Activated naive CD4-positive, alpha-beta T cell treated with anti-CD3 and anti-CD28 coated beads for 36 hours (primary cell): ENCODE measurements at regions of chr3 and their contacts with region 1.

Region 1: GRCh38 chr3:114213627-114214541 is 23.5 kb downstream of the ZNF80 start:
- DNase-seq: peak; percentile 88
- H3K4me3 Mint-ChIP-seq: no peak overlapping the region
- H3K27ac Mint-ChIP-seq: no peak overlapping the region
- H3K4me1 Mint-ChIP-seq: peaks cover 8% of the 10 kb centered on the region
- H3K27me3 Mint-ChIP-seq: no peaks in the 10 kb centered on the region

Region 2: GRCh38 chr3:113002679-113003078 is 1211.2 kb before region 1 on chr3:
- CTCF ChIA-PET with region 1: no interaction called
- intact Hi-C with region 1: loop called (anchors 10 kb)
- DNase-seq: peak; percentile 90
- H3K4me3 Mint-ChIP-seq: peak overlapping the region; percentile 42
- H3K27ac Mint-ChIP-seq: peak overlapping the region; percentile 95
- H3K4me1 Mint-ChIP-seq: peaks cover 86% of the 10 kb centered on the region
- H3K27me3 Mint-ChIP-seq: no peaks in the 10 kb centered on the region

Region 3: DNA sequence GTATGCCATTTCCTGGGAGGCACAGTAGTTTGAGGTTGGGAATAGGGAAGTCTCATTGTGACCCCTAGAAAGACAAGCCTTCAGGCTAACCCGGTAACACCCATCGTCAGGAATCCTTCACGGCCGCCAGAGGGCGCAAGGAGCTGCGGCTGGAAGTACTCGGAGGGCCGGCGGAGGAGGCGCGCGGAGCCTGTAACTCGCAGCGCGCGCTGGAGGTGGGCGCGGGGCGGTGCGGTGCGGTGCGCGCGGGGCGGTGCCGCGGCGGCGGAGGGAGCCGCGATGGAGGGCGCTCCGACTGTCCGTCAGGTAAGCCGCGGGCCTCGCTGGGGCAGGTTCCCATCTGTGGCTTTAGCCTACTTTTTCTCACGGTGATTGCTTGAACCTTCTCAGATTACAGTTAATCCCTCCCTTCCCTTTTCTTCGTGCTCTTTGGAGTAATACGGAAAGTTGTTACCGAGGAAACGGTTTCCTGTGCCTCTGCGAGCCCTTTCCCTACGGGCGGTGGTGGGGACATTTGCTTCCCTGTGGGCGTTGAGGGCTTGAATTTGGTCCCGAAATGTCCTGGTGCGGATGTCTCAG is 375.2 kb before region 1 on chr3 and contains the start of gene GRAMD1C:
- CTCF ChIA-PET with region 1: no interaction called
- intact Hi-C with region 1: loop called (anchors 2 kb)
- DNase-seq: peak; percentile 89
- H3K4me3 Mint-ChIP-seq: peak within 1 kb of the TSS; percentile 75
- H3K27ac Mint-ChIP-seq: no peak within 1 kb of the TSS
- H3K4me1 Mint-ChIP-seq: peaks cover 6% of the 10 kb centered on the region
- H3K27me3 Mint-ChIP-seq: no peaks in the 10 kb centered on the region
- total RNA-seq, gene GRAMD1C: 0.67 to 1.3 TPM

Region 4: GRCh38 chr3:114067804-114068203 is 146.1 kb before region 1 on chr3:
- CTCF ChIA-PET with region 1: no interaction called
- intact Hi-C with region 1: no loop called
- DNase-seq: no peak
- H3K4me3 Mint-ChIP-seq: no peak overlapping the region
- H3K27ac Mint-ChIP-seq: no peak overlapping the region
- H3K4me1 Mint-ChIP-seq: peaks cover 2% of the 10 kb centered on the region
- H3K27me3 Mint-ChIP-seq: no peaks in the 10 kb centered on the region

Region 5: GRCh38 chr3:114242947-114243346 is 29.1 kb after region 1 on chr3:
- CTCF ChIA-PET with region 1: no interaction called
- intact Hi-C with region 1: loop called (anchors 1 kb)
- DNase-seq: peak; percentile 39
- H3K4me3 Mint-ChIP-seq: no peak overlapping the region
- H3K27ac Mint-ChIP-seq: no peak overlapping the region
- H3K4me1 Mint-ChIP-seq: peaks cover 23% of the 10 kb centered on the region
- H3K27me3 Mint-ChIP-seq: no peaks in the 10 kb centered on the region

Region 6: GRCh38 chr3:114327665-114328064 is 113.8 kb after region 1 on chr3:
- CTCF ChIA-PET with region 1: interaction called, 9 read pairs
- intact Hi-C with region 1: loop called (anchors 1 kb)
- DNase-seq: no peak
- H3K4me3 Mint-ChIP-seq: no peak overlapping the region
- H3K27ac Mint-ChIP-seq: peak overlapping the region; percentile 37
- H3K4me1 Mint-ChIP-seq: peaks cover 52% of the 10 kb centered on the region
- H3K27me3 Mint-ChIP-seq: no peaks in the 10 kb centered on the region

Region 7: DNA sequence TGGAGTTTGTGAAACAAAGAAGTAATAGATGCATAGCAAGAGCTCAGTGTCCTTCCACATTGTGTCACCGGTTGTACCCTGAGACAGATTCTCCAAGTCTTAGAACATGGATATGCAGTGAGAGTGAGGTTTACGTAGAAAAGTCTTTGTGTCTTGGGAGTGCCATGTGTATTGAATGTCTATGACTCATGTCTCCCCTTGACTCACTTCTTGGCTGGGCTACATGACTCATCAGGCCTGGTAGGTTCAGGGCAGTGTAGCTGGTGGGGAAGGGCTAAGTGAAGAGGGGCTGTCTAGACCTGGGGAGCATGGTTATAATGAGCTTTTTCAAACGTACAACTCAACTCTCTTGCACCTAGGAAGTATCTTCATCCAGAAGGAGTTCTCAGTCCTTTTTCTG is 1576.9 kb after region 1 on chr3:
- CTCF ChIA-PET with region 1: no interaction called
- intact Hi-C with region 1: loop called (anchors 5 kb)
- DNase-seq: peak; percentile 72
- H3K4me3 Mint-ChIP-seq: no peak overlapping the region
- H3K27ac Mint-ChIP-seq: no peak overlapping the region
- H3K4me1 Mint-ChIP-seq: peaks cover 36% of the 10 kb centered on the region
- H3K27me3 Mint-ChIP-seq: no peaks in the 10 kb centered on the region